Endothelial cell of umbilical vein (primary cell): ENCODE measurements at regions of chr13 and their contacts with region 1.

Region 1: GRCh38 chr13:46759846-46760245 is 37.1 kb downstream of the ESD start:
- DNase-seq: no peak
- H3K4me3 ChIP-seq: no peak overlapping the region
- H3K27ac ChIP-seq: no peak overlapping the region
- H3K4me1 ChIP-seq: no peaks in the 10 kb centered on the region
- H3K27me3 ChIP-seq: peaks cover 0 to 4% of the 10 kb centered on the region in 2 experiments
- CTCF ChIP-seq: no peak
- POLR2A ChIP-seq: no peak

Region 2: DNA sequence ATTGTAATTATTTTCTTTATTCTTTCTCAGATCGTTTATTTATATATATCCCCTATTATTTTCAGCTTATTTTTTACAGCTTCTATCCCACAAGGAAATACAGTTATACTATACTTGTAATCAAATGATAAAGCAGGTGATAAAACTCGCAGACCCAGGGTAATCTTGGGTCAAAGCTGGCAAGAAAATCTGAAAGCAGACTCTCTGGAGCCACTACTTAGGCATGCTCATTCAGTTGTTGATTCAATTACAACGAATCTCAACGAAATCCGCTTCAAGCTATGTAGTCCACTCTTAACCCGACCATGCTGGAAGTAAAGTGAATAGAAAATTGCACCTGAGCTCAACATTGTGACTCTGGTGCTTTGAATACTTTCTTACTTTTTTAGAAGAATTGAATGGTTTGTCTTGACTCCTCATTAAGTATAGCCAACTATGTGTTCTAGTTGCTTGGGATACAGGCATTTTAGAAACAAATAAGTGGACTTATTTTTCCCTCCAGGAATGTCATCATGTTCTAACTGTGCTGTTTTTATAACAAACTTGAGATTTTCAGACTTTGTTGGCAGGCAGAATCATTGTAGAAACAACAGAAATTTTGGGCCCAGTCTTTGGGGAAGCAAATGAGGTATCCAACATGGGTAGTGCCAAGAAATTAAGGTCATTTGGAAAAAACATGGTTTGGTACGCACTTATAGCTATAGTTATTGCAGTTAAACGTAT is 15.7 kb after region 1 on chr13:
- CTCF ChIA-PET with region 1: interaction called, 14 read pairs
- POLR2A ChIA-PET with region 1: no interaction called
- dilution Hi-C with region 1: no loop called
- intact Hi-C with region 1: no loop called
- DNase-seq: no peak
- H3K4me3 ChIP-seq: no peak overlapping the region
- H3K27ac ChIP-seq: no peak overlapping the region
- H3K4me1 ChIP-seq: no peaks in the 10 kb centered on the region
- H3K27me3 ChIP-seq: no peaks in the 10 kb centered on the region
- CTCF ChIP-seq: no peak
- POLR2A ChIP-seq: no peak